Right ventricle myocardium inferior (tissue), 1 donor: ENCODE measurements at regions of chr7 and their contacts with region 1.

Region 1: GRCh38 chr7:74656837-74657691 is 454 bp upstream of the GTF2I start:
- DNase-seq: peak; percentile 100
- ATAC-seq: peak; percentile 96

Region 2: DNA sequence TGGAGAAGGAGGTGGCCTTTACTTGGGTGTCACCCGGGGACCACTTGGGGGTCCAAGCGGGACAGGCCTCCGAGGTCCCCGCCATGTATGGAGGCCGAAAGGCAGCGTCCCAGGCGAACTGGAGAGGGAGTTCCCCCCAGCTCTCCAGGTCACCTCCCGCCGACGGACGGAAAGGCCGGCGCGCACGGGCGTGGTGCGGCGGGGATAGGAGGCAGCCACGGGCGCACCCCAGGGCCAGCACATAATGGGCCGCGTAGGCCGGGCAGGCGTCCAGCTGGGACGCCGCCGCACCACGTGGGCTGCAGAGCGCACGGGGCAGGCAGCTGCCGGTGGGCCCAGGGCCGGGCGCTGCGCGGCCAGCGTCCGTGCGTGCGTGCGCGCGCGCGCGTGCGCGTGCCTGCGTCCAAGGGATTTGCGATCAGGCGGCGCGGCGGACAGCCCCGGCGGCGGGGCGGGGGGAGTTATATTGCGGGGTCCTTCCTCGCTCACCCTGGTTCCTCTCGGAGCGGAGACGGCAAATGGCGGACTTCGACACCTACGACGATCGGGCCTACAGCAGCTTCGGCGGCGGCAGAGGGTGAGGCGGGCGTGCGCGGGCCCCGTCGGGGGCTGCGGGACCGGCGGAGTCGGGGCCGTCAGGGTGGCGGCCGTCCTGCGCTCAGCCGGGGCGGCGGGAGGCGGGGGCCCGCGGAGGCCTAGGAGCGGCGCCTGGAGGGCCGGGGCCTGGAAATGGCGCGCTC is 483.0 kb before region 1 on chr7 and contains the start of gene EIF4H:
- intact Hi-C with region 1: loop called (anchors 10 kb)
- DNase-seq: peak; percentile 98
- ATAC-seq: peak; percentile 98
- total RNA-seq, gene EIF4H: 172 TPM

Region 3: GRCh38 chr7:74365322-74366022 is 291.6 kb before region 1 on chr7:
- intact Hi-C with region 1: no loop called
- DNase-seq: no peak
- ATAC-seq: peak; percentile 89

Region 4: GRCh38 chr7:74449809-74450397 is 207.2 kb before region 1 on chr7:
- intact Hi-C with region 1: loop called (anchors 5 kb)
- DNase-seq: no peak
- ATAC-seq: peak; percentile 49

Region 5: GRCh38 chr7:74587435-74588126 is 69.5 kb before region 1 on chr7:
- intact Hi-C with region 1: loop called (anchors 10 kb)
- DNase-seq: peak; percentile 93
- ATAC-seq: peak; percentile 96

Region 6: GRCh38 chr7:74625446-74625845 is 31.6 kb before region 1 on chr7:
- intact Hi-C with region 1: loop called (anchors 2 kb)
- DNase-seq: no peak
- ATAC-seq: peak; percentile 39

Region 7: GRCh38 chr7:74708569-74709275 is 51.7 kb after region 1 on chr7:
- intact Hi-C with region 1: loop called (anchors 5 kb)
- DNase-seq: no peak
- ATAC-seq: no peak